Activated T-helper 1 cell treated with anti-CD3 and anti-CD28 coated beads, Interleukin-12 subunit alpha, Interleukin-12 subunit beta, Interleukin-2, Interleukin-4 antibody, amounts not matched to agents 30 ng/mL and 10 ng/mL and 1 ng/mL, durations not matched to agents 14 hours and 24 hours and 36 hours (primary cell): ENCODE measurements at regions of chr4 and their contacts with region 1.

Region 1: DNA sequence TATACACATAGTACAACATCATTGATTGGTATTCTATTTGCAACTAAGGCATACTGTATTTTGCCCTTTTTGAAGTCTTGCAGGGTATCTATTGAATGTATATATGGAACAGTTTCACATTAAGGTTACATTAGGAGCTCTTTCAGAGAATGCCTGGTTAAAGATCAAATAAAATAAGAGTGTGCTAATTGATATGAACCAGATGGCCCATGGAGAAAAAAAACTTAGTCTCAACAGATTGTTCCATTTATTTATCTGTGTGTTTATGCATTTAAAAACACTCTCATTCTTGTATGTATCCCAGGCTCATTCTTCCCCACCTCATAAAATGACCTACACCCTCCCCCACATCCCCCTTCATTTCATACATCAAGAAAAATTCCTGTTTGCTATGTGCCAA is 35.2 kb upstream of the GRIA2 start:
- DNase-seq: no peak
- H3K4me3 Mint-ChIP-seq: no peak overlapping the region
- H3K27ac Mint-ChIP-seq: no peak overlapping the region
- H3K4me1 Mint-ChIP-seq: no peaks in the 10 kb centered on the region
- H3K27me3 Mint-ChIP-seq: no peaks in the 10 kb centered on the region

Region 2: DNA sequence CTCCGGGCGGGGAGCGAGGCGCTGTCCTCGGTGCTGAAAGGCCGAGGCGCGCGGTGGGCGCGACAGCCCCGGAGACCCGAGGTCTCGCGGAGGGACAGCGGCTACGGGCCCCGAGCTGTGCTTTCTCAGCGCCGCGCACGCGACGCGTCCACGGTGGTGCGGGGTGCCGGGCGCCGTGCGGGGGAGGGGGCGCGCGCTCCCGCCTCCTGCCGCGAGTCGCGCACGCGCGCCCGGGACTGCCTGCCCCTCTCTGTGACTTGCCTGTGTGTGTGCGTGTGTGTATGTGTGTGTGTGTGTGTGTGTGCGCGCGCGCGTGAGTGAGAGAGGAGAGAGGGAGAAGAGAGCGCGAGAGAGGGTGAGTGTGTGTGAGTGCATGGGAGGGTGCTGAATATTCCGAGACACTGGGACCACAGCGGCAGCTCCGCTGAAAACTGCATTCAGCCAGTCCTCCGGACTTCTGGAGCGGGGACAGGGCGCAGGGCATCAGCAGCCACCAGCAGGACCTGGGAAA is 35.1 kb after region 1 on chr4 and contains the start of gene GRIA2:
- intact Hi-C with region 1: loop called (anchors 1 kb)
- DNase-seq: no peak
- H3K4me3 Mint-ChIP-seq: no peak within 1 kb of the TSS
- H3K27ac Mint-ChIP-seq: no peak within 1 kb of the TSS
- H3K4me1 Mint-ChIP-seq: no peaks in the 10 kb centered on the region
- H3K27me3 Mint-ChIP-seq: peaks cover 22% of the 10 kb centered on the region
- total RNA-seq, gene GRIA2: not detected in 2 replicates